A673 (cell line): ENCODE measurements at regions of chr15 and their contacts with region 1.

Region 1: GRCh38 chr15:48352474-48353072 is 21.3 kb downstream of the DUT start:
- DNase-seq: peak; percentile 83
- H3K4me3 ChIP-seq: no peak overlapping the region
- H3K27ac ChIP-seq: no peak overlapping the region
- H3K4me1 ChIP-seq: no peaks in the 10 kb centered on the region
- H3K27me3 ChIP-seq: no peaks in the 10 kb centered on the region
- CTCF ChIP-seq: peak; percentile 89

Region 2: DNA sequence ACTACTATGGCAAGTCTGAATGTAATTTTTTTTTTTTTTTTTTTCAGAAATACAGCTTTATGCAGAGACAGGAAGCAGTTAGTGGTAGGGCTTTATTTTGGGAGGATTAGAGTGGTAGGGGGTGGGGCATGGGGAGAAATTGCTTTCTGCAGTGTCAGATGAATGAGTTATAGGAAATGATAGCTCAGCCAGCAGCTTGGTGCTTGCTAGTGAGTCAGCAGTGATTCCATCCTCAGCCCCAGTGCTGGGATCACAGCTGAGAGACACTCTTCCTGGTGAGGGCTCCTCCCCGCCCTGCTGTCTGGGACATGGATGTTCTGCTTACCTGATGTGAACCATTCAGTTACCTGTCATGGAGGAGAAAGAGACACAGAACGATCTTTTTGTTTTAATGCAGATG is 595.7 kb before region 1 on chr15:
- CTCF ChIA-PET with region 1: no interaction called
- POLR2A ChIA-PET with region 1: interaction called, 13 read pairs
- intact Hi-C with region 1: no loop called
- DNase-seq: peak; percentile 92
- H3K4me3 ChIP-seq: no peak overlapping the region
- H3K27ac ChIP-seq: peak overlapping the region; percentile 14
- H3K4me1 ChIP-seq: peaks cover 14% of the 10 kb centered on the region
- H3K27me3 ChIP-seq: no peaks in the 10 kb centered on the region
- CTCF ChIP-seq: no peak

Region 3: DNA sequence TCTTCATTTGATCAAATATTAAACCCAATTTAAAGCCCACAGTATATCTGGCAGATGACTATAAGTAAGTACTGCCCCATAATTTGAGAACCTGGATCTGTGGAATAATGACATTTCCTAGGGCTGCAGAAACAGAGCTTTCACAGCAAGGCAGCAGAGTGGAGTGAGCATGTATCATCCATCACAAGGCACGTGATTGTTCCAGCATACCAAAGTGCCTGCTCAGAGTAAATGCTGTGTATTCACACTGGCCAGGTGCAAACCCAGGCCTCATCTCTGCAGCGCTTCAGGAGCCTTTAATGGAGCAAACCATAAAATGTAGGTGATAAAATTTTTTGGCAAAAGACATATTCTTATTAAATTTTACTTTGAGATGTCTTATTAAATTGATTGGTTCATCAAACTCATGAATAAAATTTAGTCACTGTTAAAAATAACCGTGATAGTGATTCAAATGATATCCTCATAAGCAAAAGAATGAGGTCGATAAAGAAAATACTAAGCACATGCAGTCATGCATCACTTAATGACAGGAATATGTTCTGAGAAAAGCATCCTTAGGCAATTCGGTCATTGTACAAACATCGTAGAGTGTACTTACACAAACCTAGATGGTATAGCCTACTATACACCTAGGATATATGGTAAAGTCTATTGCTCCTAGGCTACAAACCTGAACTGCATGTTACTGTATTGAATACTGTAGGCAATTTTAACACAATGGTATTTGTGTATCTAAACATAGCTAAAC is 331.1 kb before region 1 on chr15:
- CTCF ChIA-PET with region 1: no interaction called
- POLR2A ChIA-PET with region 1: no interaction called
- intact Hi-C with region 1: no loop called
- DNase-seq: no peak
- H3K4me3 ChIP-seq: no peak overlapping the region
- H3K27ac ChIP-seq: no peak overlapping the region
- H3K4me1 ChIP-seq: no peaks in the 10 kb centered on the region
- H3K27me3 ChIP-seq: peaks cover 2% of the 10 kb centered on the region
- CTCF ChIP-seq: no peak

Region 4: GRCh38 chr15:48168626-48169025 is 183.9 kb before region 1 on chr15:
- CTCF ChIA-PET with region 1: no interaction called
- POLR2A ChIA-PET with region 1: no interaction called
- intact Hi-C with region 1: no loop called
- DNase-seq: no peak
- H3K4me3 ChIP-seq: no peak overlapping the region
- H3K27ac ChIP-seq: no peak overlapping the region
- H3K4me1 ChIP-seq: peaks cover 4% of the 10 kb centered on the region
- H3K27me3 ChIP-seq: no peaks in the 10 kb centered on the region
- CTCF ChIP-seq: no peak

Region 5: GRCh38 chr15:48336940-48337339 is 15.6 kb before region 1 on chr15:
- CTCF ChIA-PET with region 1: interaction called, 16 read pairs
- POLR2A ChIA-PET with region 1: no interaction called
- intact Hi-C with region 1: no loop called
- DNase-seq: peak; percentile 63
- H3K4me3 ChIP-seq: no peak overlapping the region
- H3K27ac ChIP-seq: no peak overlapping the region
- H3K4me1 ChIP-seq: peaks cover 41% of the 10 kb centered on the region
- H3K27me3 ChIP-seq: no peaks in the 10 kb centered on the region
- CTCF ChIP-seq: peak; percentile 71

Region 6: GRCh38 chr15:49145651-49146609 is 793.4 kb after region 1 on chr15:
- CTCF ChIA-PET with region 1: interaction called, 10 read pairs
- POLR2A ChIA-PET with region 1: no interaction called
- intact Hi-C with region 1: loop called (anchors 10 kb)
- DNase-seq: peak; percentile 71
- H3K4me3 ChIP-seq: no peak overlapping the region
- H3K27ac ChIP-seq: no peak overlapping the region
- H3K4me1 ChIP-seq: peaks cover 31% of the 10 kb centered on the region
- H3K27me3 ChIP-seq: no peaks in the 10 kb centered on the region
- CTCF ChIP-seq: peak; percentile 90

Region 7: GRCh38 chr15:49842031-49842750 is 1489.6 kb after region 1 on chr15:
- CTCF ChIA-PET with region 1: no interaction called
- POLR2A ChIA-PET with region 1: no interaction called
- intact Hi-C with region 1: no loop called
- DNase-seq: no peak
- H3K4me3 ChIP-seq: no peak overlapping the region
- H3K27ac ChIP-seq: no peak overlapping the region
- H3K4me1 ChIP-seq: no peaks in the 10 kb centered on the region
- H3K27me3 ChIP-seq: no peaks in the 10 kb centered on the region
- CTCF ChIP-seq: no peak